ENCODE measurements at regions of chr11 and their contacts with region 1.

Region 1: GRCh38 chr11:128472128-128473089 is 114.9 kb downstream of the ETS1 start:
- DNase-seq: peak; percentile 61
- H3K4me3 Mint-ChIP-seq: peak overlapping the region; percentile 80
- H3K27ac Mint-ChIP-seq: peak overlapping the region; percentile 95
- H3K4me1 Mint-ChIP-seq: peaks cover 94% of the 10 kb centered on the region
- H3K27me3 Mint-ChIP-seq: no peaks in the 10 kb centered on the region

Region 2: DNA sequence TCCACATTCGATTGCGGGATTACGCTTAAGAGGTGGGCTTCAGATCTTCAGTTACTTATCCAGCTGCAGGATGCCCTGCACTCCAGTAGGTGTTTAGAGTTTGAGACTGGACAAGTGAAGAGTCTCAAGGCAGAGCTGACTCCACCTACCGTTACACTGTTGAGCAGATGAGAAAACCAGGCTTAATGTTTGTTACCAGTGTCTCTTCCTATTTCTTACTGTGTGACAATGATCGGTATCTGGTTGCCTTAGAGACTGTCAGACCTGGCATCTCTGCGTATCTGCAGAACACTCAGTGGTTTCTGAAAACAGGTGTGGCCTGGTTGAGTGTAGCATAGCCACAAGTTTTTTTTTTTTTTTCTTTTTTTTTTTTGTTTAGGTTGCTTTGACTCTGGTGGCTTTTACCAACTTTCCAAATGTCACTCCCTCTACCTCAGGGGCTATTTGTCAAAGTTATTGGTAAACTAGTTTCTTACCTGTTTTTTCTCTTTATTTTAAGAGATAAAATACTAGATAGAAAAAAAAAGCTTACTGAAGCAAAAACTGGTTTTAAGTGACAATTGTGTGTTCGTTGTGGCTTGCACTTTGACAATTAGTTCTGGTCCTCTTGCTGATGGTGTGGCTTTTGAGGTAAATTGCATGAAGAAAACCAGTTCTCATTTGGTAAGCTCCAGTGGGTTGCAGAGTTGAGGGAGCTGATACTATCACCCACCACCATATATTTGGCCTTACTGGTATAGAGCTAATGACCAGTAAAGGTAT is 169.8 kb before region 1 on chr11:
- intact Hi-C with region 1: loop called (anchors 1 kb)
- DNase-seq: peak; percentile 79
- H3K4me3 Mint-ChIP-seq: peak overlapping the region; percentile 91
- H3K27ac Mint-ChIP-seq: peak overlapping the region; percentile 97
- H3K4me1 Mint-ChIP-seq: peaks cover 85% of the 10 kb centered on the region
- H3K27me3 Mint-ChIP-seq: no peaks in the 10 kb centered on the region

Region 3: GRCh38 chr11:128342511-128343134 is 129.8 kb before region 1 on chr11:
- intact Hi-C with region 1: loop called (anchors 1 kb)
- DNase-seq: peak; percentile 70
- H3K4me3 Mint-ChIP-seq: peak overlapping the region; percentile 76
- H3K27ac Mint-ChIP-seq: peak overlapping the region; percentile 85
- H3K4me1 Mint-ChIP-seq: peaks cover 92% of the 10 kb centered on the region
- H3K27me3 Mint-ChIP-seq: no peaks in the 10 kb centered on the region

Region 4: DNA sequence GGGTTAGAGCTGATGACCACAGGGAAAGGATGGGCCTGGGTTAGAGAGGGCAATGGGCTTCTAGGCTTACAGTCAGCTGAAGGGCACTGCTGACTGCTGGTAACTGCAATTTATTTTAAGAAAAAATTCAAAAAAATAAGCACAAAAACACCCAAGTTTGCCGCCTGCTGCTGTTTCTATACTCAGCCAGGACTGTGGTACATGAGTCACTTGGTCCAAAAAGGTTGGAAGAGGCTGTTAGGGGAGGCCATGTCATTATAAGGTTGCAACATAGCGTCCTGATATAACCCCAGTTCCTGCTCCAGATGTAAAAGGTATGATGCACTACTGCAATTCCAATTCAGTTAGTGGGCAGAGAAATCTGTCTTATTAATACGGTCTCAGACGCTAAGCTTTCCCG is 16.1 kb after region 1 on chr11:
- intact Hi-C with region 1: loop called (anchors 1 kb)
- DNase-seq: no peak
- H3K4me3 Mint-ChIP-seq: peak overlapping the region; percentile 32
- H3K27ac Mint-ChIP-seq: peak overlapping the region; percentile 83
- H3K4me1 Mint-ChIP-seq: peaks cover 95% of the 10 kb centered on the region
- H3K27me3 Mint-ChIP-seq: no peaks in the 10 kb centered on the region

Region 5: GRCh38 chr11:128512474-128512996 is 40.1 kb after region 1 on chr11:
- intact Hi-C with region 1: loop called (anchors 2 kb)
- DNase-seq: peak; percentile 40
- H3K4me3 Mint-ChIP-seq: peak overlapping the region; percentile 96
- H3K27ac Mint-ChIP-seq: peak overlapping the region; percentile 98
- H3K4me1 Mint-ChIP-seq: peaks cover 100% of the 10 kb centered on the region
- H3K27me3 Mint-ChIP-seq: no peaks in the 10 kb centered on the region

Measured in activated T-helper 1 cell treated with anti-CD3 and anti-CD28 coated beads, Interleukin-12 subunit alpha, Interleukin-12 subunit beta, Interleukin-2, Interleukin-4 antibody, amounts not matched to agents 30 ng/mL and 10 ng/mL and 1 ng/mL, durations not matched to agents 14 hours and 24 hours and 36 hours (primary cell).